ENCODE measurements at regions of chr14 and their contacts with region 1.

Region 1: DNA sequence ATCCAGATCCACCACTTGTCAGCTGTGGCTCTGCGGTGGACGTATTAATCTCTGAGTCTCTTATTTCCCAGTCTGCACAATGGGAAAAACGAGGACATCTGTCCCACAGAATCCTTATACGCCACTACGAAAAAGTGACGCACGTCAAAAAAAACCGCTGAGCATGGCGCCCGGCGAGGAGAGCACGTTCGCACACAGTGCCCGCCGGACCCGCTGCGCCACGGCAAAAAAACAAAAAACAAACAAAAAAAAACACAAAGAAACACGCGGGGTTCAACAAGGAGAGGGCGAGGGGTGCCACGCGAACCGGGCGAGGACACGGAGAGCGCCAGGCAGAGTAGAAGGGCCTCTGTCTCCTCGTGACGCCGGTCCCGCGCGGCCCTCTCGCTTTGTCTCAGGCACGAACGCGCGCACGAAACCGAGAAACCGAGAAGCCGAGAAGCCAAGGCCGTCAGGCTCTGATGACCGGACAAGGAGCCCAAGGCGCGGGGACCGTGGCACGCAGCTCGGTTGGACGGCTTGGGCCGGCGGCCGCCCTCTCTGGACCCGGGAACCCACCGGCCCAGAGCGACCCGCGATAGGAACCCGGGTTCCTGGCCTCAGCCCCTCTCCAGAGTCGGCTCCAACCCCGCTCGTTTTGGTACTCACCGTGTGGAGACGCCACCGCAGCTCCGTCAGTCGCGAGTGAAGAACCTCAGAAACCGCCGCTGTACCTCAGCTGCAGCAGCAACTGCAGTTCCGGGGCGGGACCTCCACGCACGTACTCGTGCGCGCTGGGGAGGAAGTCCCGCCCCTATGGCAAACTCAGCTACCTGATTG is at the start of gene DDX24:
- DNase-seq: peak; percentile 97
- ATAC-seq: peak; percentile 99 to 100 (median 100)
- H3K4me3 ChIP-seq: peak within 1 kb of the TSS; percentile 71 to 99 (median 97)
- H3K27ac ChIP-seq: peak within 1 kb of the TSS; percentile 61 to 96 (median 92)
- H3K4me1 ChIP-seq: peaks cover 10 to 55% (median 52%) of the 10 kb centered on the region in 9 donors
- H3K27me3 ChIP-seq: no peaks in the 10 kb centered on the region
- CTCF ChIP-seq: no peak
- total RNA-seq, gene DDX24: 190 to 269 (median 240) TPM

Region 2: GRCh38 chr14:94026173-94026888 is 54.3 kb before region 1 on chr14 and contains the start of gene OTUB2:
- intact Hi-C with region 1: loop called in 2 of 10 experiments (anchors 5 kb)
- DNase-seq: peak; percentile 98
- ATAC-seq: peak; percentile 94 to 100 (median 100)
- H3K4me3 ChIP-seq: peak within 1 kb of the TSS; percentile 40 to 77 (median 70)
- H3K27ac ChIP-seq: peak within 1 kb of the TSS in 2 of 10 donors; percentile 15 to 45
- H3K4me1 ChIP-seq: peaks cover 0 to 28% (median 6%) of the 10 kb centered on the region in 9 donors
- H3K27me3 ChIP-seq: peaks cover 0 to 4% (median 0%) of the 10 kb centered on the region in 7 donors
- CTCF ChIP-seq: no peak
- total RNA-seq, gene OTUB2: 0.07 to 0.37 (median 0.15) TPM in 9 of 10 donors, not detected in the other

Region 3: DNA sequence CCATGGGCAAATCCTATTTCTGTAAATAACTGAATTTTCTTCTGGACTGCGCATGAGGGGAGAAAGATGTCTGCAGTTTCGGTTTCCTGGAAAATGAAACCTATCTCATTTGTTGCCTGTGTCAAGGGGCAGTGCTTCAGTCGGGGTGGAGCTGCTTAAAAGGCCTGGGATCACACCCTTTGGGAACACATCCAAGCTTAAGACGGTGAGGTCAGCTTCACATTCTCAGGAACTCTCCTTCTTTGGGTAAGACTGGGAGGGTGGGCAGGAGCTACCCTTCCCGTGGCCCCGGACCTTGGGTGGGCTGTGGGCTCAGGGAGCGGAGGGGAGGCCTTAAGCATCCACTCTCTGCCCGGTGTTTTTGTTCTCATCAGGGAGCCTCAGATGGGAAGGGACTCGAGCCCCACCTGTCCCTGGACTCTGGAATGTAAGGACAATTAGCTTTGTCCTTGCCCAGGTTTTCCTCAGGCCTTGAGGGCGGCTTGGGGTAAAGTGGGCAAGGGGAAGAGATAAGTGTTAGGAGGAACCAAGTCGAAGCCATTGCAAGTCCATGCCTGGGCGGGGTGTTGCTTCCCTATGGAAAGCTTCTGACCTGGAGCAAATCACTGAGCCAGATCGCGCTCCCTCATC is 30.0 kb after region 1 on chr14 and contains the start of gene IFI27:
- intact Hi-C with region 1: loop called in 2 of 10 experiments (anchors 2 kb)
- DNase-seq: peak in 1 of 2 donors; percentile 88
- ATAC-seq: peak; percentile 54 to 88 (median 78)
- H3K4me3 ChIP-seq: peak within 1 kb of the TSS; percentile 40 to 73 (median 60)
- H3K27ac ChIP-seq: peak within 1 kb of the TSS; percentile 86 to 97 (median 90)
- H3K4me1 ChIP-seq: peaks cover 14 to 56% (median 41%) of the 10 kb centered on the region in 9 donors
- H3K27me3 ChIP-seq: no peaks in the 10 kb centered on the region
- CTCF ChIP-seq: no peak
- total RNA-seq, gene IFI27: 76.5 to 473 (median 148) TPM

Measured in heart right ventricle (tissue), 16 donors.